Endothelial cell of umbilical vein (primary cell): ENCODE measurements at regions of chr6 and their contacts with region 1.

Region 1: GRCh38 chr6:13194852-13195251 is 133.5 kb downstream of the TBC1D7 start:
- DNase-seq: peak; percentile 69
- H3K4me3 ChIP-seq: no peak overlapping the region
- H3K27ac ChIP-seq: no peak overlapping the region
- H3K4me1 ChIP-seq: no peaks in the 10 kb centered on the region
- H3K27me3 ChIP-seq: no peaks in the 10 kb centered on the region
- CTCF ChIP-seq: peak; percentile 51 to 72
- POLR2A ChIP-seq: no peak

Region 2: GRCh38 chr6:12957321-12958051 is 237.4 kb before region 1 on chr6:
- CTCF ChIA-PET with region 1: interaction called, 7 read pairs
- POLR2A ChIA-PET with region 1: no interaction called
- dilution Hi-C with region 1: no loop called
- intact Hi-C with region 1: loop called (anchors 5 kb)
- DNase-seq: peak; percentile 76
- H3K4me3 ChIP-seq: peak overlapping the region; percentile 18 to 85 (median 50)
- H3K27ac ChIP-seq: peak overlapping the region; percentile 56
- H3K4me1 ChIP-seq: peaks cover 14% of the 10 kb centered on the region
- H3K27me3 ChIP-seq: no peaks in the 10 kb centered on the region
- CTCF ChIP-seq: peak in 1 of 2 donors; percentile 3
- POLR2A ChIP-seq: no peak

Region 3: DNA sequence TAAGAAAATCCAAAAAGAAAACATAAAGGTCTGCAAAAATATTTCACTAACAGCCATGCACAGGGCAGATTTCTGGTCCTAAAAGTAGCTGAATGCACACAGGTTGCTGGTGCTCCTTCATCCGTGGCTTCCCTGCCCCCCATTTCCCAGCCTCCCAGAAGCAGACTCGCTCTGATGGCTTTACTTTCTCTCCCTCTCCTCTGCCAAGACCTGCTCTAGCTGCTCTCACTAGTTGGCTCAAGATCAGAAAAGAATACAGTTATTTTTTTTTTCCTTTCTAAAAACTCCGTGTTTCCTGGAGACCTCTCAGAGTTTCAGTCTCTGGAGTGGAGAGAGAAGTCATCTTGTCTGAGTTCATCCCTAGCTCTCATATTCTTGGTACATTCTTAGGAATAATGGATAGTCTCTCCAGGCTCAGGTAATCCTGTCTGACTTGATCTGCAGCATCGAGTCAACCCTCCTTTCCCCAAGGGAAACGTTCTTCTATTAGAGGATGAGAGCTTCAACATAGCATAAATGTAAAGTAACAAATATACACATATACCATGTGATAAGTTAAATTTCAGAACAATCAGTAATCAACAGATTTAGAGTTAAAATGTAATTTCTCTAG is 80.8 kb before region 1 on chr6:
- CTCF ChIA-PET with region 1: no interaction called
- POLR2A ChIA-PET with region 1: no interaction called
- dilution Hi-C with region 1: no loop called
- intact Hi-C with region 1: no loop called
- DNase-seq: no peak
- H3K4me3 ChIP-seq: no peak overlapping the region
- H3K27ac ChIP-seq: no peak overlapping the region
- H3K4me1 ChIP-seq: no peaks in the 10 kb centered on the region
- H3K27me3 ChIP-seq: no peaks in the 10 kb centered on the region
- CTCF ChIP-seq: no peak
- POLR2A ChIP-seq: no peak

Region 4: DNA sequence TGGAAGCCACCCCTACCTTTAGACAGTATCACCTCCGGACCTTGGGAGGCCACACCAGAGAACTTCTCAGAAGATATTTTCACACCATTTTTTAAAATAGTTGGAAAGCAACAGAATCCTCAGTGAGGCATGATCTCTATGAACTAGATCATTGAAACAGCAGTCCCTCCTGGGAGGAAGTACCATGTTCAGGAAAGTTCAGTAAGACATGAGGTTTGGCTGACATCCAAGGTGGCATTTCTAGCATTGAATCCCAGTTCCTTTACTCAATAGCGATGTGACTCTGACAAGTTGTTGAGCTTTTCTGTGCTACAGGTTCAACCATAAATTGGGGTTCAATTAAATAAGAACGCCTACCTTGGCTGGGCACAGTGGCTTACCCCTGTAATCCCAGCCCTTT is 35.6 kb before region 1 on chr6:
- CTCF ChIA-PET with region 1: no interaction called
- POLR2A ChIA-PET with region 1: no interaction called
- dilution Hi-C with region 1: no loop called
- intact Hi-C with region 1: no loop called
- DNase-seq: no peak
- H3K4me3 ChIP-seq: no peak overlapping the region
- H3K27ac ChIP-seq: no peak overlapping the region
- H3K4me1 ChIP-seq: no peaks in the 10 kb centered on the region
- H3K27me3 ChIP-seq: no peaks in the 10 kb centered on the region
- CTCF ChIP-seq: no peak
- POLR2A ChIP-seq: no peak

Region 5: GRCh38 chr6:13277836-13278563 is 83.1 kb after region 1 on chr6:
- CTCF ChIA-PET with region 1: interaction called, 8 read pairs
- POLR2A ChIA-PET with region 1: no interaction called
- dilution Hi-C with region 1: no loop called
- intact Hi-C with region 1: loop called (anchors 1 kb)
- DNase-seq: no peak
- H3K4me3 ChIP-seq: no peak overlapping the region
- H3K27ac ChIP-seq: no peak overlapping the region
- H3K4me1 ChIP-seq: no peaks in the 10 kb centered on the region
- H3K27me3 ChIP-seq: no peaks in the 10 kb centered on the region
- CTCF ChIP-seq: peak in 1 of 2 donors; percentile 29
- POLR2A ChIP-seq: no peak

Region 6: GRCh38 chr6:13302751-13303667 is 108.2 kb after region 1 on chr6:
- CTCF ChIA-PET with region 1: interaction called, 20 read pairs
- POLR2A ChIA-PET with region 1: no interaction called
- dilution Hi-C with region 1: no loop called
- intact Hi-C with region 1: no loop called
- DNase-seq: peak; percentile 93
- H3K4me3 ChIP-seq: peak overlapping the region in 1 of 3 experiments; percentile 15
- H3K27ac ChIP-seq: peak overlapping the region; percentile 86
- H3K4me1 ChIP-seq: peaks cover 36% of the 10 kb centered on the region
- H3K27me3 ChIP-seq: no peaks in the 10 kb centered on the region
- CTCF ChIP-seq: no peak
- POLR2A ChIP-seq: no peak

Region 7: GRCh38 chr6:13308332-13308731 is 113.5 kb after region 1 on chr6:
- CTCF ChIA-PET with region 1: interaction called, 20 read pairs
- POLR2A ChIA-PET with region 1: no interaction called
- dilution Hi-C with region 1: no loop called
- intact Hi-C with region 1: no loop called
- DNase-seq: no peak
- H3K4me3 ChIP-seq: no peak overlapping the region
- H3K27ac ChIP-seq: peak overlapping the region; percentile 89
- H3K4me1 ChIP-seq: peaks cover 36% of the 10 kb centered on the region
- H3K27me3 ChIP-seq: no peaks in the 10 kb centered on the region
- CTCF ChIP-seq: no peak
- POLR2A ChIP-seq: no peak

Region 8: GRCh38 chr6:14270925-14271791 is 1076.3 kb after region 1 on chr6:
- CTCF ChIA-PET with region 1: no interaction called
- POLR2A ChIA-PET with region 1: no interaction called
- dilution Hi-C with region 1: no loop called
- intact Hi-C with region 1: no loop called
- DNase-seq: no peak
- H3K4me3 ChIP-seq: no peak overlapping the region
- H3K27ac ChIP-seq: no peak overlapping the region
- H3K4me1 ChIP-seq: no peaks in the 10 kb centered on the region
- H3K27me3 ChIP-seq: no peaks in the 10 kb centered on the region
- CTCF ChIP-seq: no peak
- POLR2A ChIP-seq: no peak